ENCODE measurements at regions of chr10 and their contacts with region 1.

Region 1: GRCh38 chr10:69051303-69051702 is 36.6 kb upstream of the SRGN start:
- H3K4me3 Mint-ChIP-seq: peak overlapping the region; percentile 14
- H3K27ac Mint-ChIP-seq: peak overlapping the region; percentile 99
- H3K4me1 Mint-ChIP-seq: peaks cover 94% of the 10 kb centered on the region
- H3K27me3 Mint-ChIP-seq: no peaks in the 10 kb centered on the region

Region 2: GRCh38 chr10:69087590-69088470 is 36.5 kb after region 1 on chr10 and contains the start of gene SRGN:
- intact Hi-C with region 1: loop called (anchors 1 kb)
- H3K4me3 Mint-ChIP-seq: peak within 1 kb of the TSS; percentile 81
- H3K27ac Mint-ChIP-seq: peak within 1 kb of the TSS; percentile 86
- H3K4me1 Mint-ChIP-seq: peaks cover 51% of the 10 kb centered on the region
- H3K27me3 Mint-ChIP-seq: no peaks in the 10 kb centered on the region

Region 3: GRCh38 chr10:69285699-69286098 is 234.4 kb after region 1 on chr10:
- intact Hi-C with region 1: no loop called
- H3K4me3 Mint-ChIP-seq: no peak overlapping the region
- H3K27ac Mint-ChIP-seq: no peak overlapping the region
- H3K4me1 Mint-ChIP-seq: peaks cover 16% of the 10 kb centered on the region
- H3K27me3 Mint-ChIP-seq: no peaks in the 10 kb centered on the region

Measured in dendritic cell treated with granulocyte-macrophage colony-stimulating factor and Interleukin-4, amounts not matched to agents 40 ng/mL and 50 ng/mL, for 4 days (primary cell).